A673 (cell line): ENCODE measurements at regions of chr4 and their contacts with region 1.

Region 1: GRCh38 chr4:19971829-19972228 is 279.9 kb upstream of the SLIT2 start:
- DNase-seq: no peak
- H3K4me3 ChIP-seq: no peak overlapping the region
- H3K27ac ChIP-seq: no peak overlapping the region
- H3K4me1 ChIP-seq: no peaks in the 10 kb centered on the region
- H3K27me3 ChIP-seq: no peaks in the 10 kb centered on the region
- CTCF ChIP-seq: no peak

Region 2: GRCh38 chr4:19309378-19309777 is 662.5 kb before region 1 on chr4:
- CTCF ChIA-PET with region 1: no interaction called
- POLR2A ChIA-PET with region 1: no interaction called
- intact Hi-C with region 1: loop called (anchors 10 kb)
- DNase-seq: peak; percentile 96
- H3K4me3 ChIP-seq: no peak overlapping the region
- H3K27ac ChIP-seq: no peak overlapping the region
- H3K4me1 ChIP-seq: peaks cover 32% of the 10 kb centered on the region
- H3K27me3 ChIP-seq: no peaks in the 10 kb centered on the region
- CTCF ChIP-seq: peak; percentile 60

Region 3: GRCh38 chr4:19534159-19534558 is 437.7 kb before region 1 on chr4:
- CTCF ChIA-PET with region 1: no interaction called
- POLR2A ChIA-PET with region 1: no interaction called
- intact Hi-C with region 1: no loop called
- DNase-seq: no peak
- H3K4me3 ChIP-seq: no peak overlapping the region
- H3K27ac ChIP-seq: no peak overlapping the region
- H3K4me1 ChIP-seq: peaks cover 3% of the 10 kb centered on the region
- H3K27me3 ChIP-seq: no peaks in the 10 kb centered on the region
- CTCF ChIP-seq: no peak